Endothelial cell of umbilical vein (primary cell): ENCODE measurements at regions of chr20 and their contacts with region 1.

Region 1: GRCh38 chr20:62350093-62350628 is 17.0 kb downstream of the LAMA5 start:
- DNase-seq: no peak
- H3K4me3 ChIP-seq: no peak overlapping the region
- H3K27ac ChIP-seq: peak overlapping the region; percentile 3
- H3K4me1 ChIP-seq: peaks cover 1% of the 10 kb centered on the region
- H3K27me3 ChIP-seq: no peaks in the 10 kb centered on the region
- CTCF ChIP-seq: no peak
- POLR2A ChIP-seq: no peak

Region 2: GRCh38 chr20:62321521-62321948 is 28.6 kb before region 1 on chr20:
- CTCF ChIA-PET with region 1: no interaction called
- POLR2A ChIA-PET with region 1: interaction called, 10 read pairs
- dilution Hi-C with region 1: no loop called
- intact Hi-C with region 1: loop called (anchors 5 kb)
- DNase-seq: no peak
- H3K4me3 ChIP-seq: no peak overlapping the region
- H3K27ac ChIP-seq: no peak overlapping the region
- H3K4me1 ChIP-seq: no peaks in the 10 kb centered on the region
- H3K27me3 ChIP-seq: no peaks in the 10 kb centered on the region
- CTCF ChIP-seq: no peak
- POLR2A ChIP-seq: no peak

Region 3: GRCh38 chr20:62362981-62363919 is 13.1 kb after region 1 on chr20:
- CTCF ChIA-PET with region 1: interaction called, 13 read pairs
- POLR2A ChIA-PET with region 1: no interaction called
- dilution Hi-C with region 1: no loop called
- intact Hi-C with region 1: no loop called
- DNase-seq: no peak
- H3K4me3 ChIP-seq: no peak overlapping the region
- H3K27ac ChIP-seq: peak overlapping the region; percentile 85
- H3K4me1 ChIP-seq: peaks cover 58% of the 10 kb centered on the region
- H3K27me3 ChIP-seq: no peaks in the 10 kb centered on the region
- CTCF ChIP-seq: no peak
- POLR2A ChIP-seq: no peak

Region 4: GRCh38 chr20:62368976-62369814 is 19.0 kb after region 1 on chr20:
- CTCF ChIA-PET with region 1: interaction called, 13 read pairs
- POLR2A ChIA-PET with region 1: no interaction called
- dilution Hi-C with region 1: no loop called
- intact Hi-C with region 1: no loop called
- DNase-seq: peak; percentile 50
- H3K4me3 ChIP-seq: no peak overlapping the region
- H3K27ac ChIP-seq: no peak overlapping the region
- H3K4me1 ChIP-seq: peaks cover 33% of the 10 kb centered on the region
- H3K27me3 ChIP-seq: no peaks in the 10 kb centered on the region
- CTCF ChIP-seq: peak; percentile 31 to 62
- POLR2A ChIP-seq: no peak